Calu3 (cell line): ENCODE measurements at regions of chr2 and their contacts with region 1.

Region 1: GRCh38 chr2:118088051-118089024 is at the start of gene INSIG2:
- DNase-seq: peak; percentile 97
- H3K4me3 Mint-ChIP-seq: peak within 1 kb of the TSS; percentile 95
- H3K27ac Mint-ChIP-seq: peak within 1 kb of the TSS; percentile 76
- H3K4me1 Mint-ChIP-seq: peaks cover 32% of the 10 kb centered on the region
- H3K27me3 Mint-ChIP-seq: no peaks in the 10 kb centered on the region
- CTCF ChIP-seq: no peak
- total RNA-seq, gene INSIG2: 64.4 and 67.1 TPM in 2 replicates

Region 2: GRCh38 chr2:118112771-118113334 is 24.5 kb after region 1 on chr2:
- CTCF ChIA-PET with region 1: interaction called, 5 read pairs
- intact Hi-C with region 1: loop called (anchors 2 kb)
- DNase-seq: peak; percentile 51
- H3K4me3 Mint-ChIP-seq: peak overlapping the region; percentile 21
- H3K27ac Mint-ChIP-seq: peak overlapping the region; percentile 94
- H3K4me1 Mint-ChIP-seq: peaks cover 67% of the 10 kb centered on the region
- H3K27me3 Mint-ChIP-seq: no peaks in the 10 kb centered on the region
- CTCF ChIP-seq: no peak

Region 3: DNA sequence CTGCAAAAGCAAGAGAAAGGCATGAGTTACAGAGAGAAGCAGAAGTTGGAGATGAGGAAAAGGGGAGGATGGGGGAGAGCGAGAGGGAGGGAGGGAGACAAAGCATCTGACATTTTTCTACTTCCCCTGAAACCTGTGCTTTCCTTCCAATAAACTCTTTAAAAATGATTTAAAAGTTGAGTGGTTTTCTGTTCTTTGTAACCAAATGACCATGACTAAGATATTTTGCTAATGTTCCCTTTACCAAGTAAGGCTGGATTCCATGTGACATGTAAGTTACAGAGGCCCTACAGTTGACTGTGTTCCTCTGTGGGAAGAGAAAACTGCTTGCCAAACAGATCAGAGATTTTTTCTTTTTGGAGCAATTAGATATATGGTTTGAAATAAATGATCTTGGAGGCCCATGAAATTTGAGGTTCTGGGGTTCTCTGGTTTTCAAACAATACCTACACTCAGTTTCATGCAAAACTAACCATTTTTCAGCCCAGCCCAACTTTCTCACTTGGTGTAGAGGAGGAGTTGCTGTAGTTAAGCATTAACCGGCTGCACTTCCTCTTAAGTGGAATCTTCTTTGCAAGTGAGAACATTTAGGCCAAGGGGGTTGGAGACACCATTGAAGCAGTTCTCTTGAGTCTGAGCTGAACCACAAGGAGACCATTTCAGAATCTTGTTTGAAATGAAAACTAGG is 34.4 kb after region 1 on chr2:
- CTCF ChIA-PET with region 1: interaction called, 6 read pairs
- intact Hi-C with region 1: loop called (anchors 2 kb)
- DNase-seq: peak; percentile 58
- H3K4me3 Mint-ChIP-seq: peak overlapping the region; percentile 61
- H3K27ac Mint-ChIP-seq: peak overlapping the region; percentile 99
- H3K4me1 Mint-ChIP-seq: peaks cover 74% of the 10 kb centered on the region
- H3K27me3 Mint-ChIP-seq: no peaks in the 10 kb centered on the region
- CTCF ChIP-seq: no peak